Sigmoid colon (tissue), 7 donors: ENCODE measurements at regions of chr19 and their contacts with region 1.

Region 1: DNA sequence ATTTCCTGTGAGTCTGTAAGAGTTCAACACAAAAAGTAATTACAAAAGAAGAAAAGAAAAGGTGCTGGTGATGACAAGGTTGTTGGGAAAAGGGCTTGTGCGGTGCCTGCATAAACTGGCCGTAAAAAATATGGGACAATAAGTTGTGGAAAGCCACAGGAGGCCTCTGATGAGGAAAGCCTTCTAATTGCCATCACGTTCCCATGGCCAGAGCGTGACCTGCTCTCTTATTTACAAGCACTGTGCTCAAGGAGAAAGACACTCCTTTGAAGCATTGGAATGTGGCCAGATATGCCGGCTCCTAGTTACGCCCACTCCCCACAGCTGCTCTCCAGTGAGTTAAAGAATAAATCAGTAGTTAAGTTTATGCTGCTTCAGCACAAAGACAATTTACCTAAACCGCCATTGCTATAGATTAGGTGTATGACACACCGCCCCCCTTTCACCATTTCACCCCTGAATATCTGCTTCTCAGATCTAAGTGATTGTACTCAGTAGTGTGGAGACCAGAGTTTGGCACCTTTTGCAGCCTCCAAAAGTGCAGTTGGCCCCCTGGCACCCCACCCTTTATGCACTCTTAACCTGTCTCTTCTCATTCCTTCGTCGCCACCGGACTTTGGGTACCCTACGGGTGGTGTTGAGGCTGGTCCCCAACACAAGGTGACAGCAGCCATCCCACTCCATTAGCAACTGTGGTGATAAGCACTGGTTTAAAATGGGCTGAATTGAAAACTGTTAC is 8.1 kb upstream of the PGLYRP1 start:
- DNase-seq: no peak
- H3K4me3 ChIP-seq: no peak overlapping the region
- H3K27ac ChIP-seq: no peak overlapping the region
- H3K4me1 ChIP-seq: peaks cover 0 to 4% (median 0%) of the 10 kb centered on the region in 4 donors
- H3K27me3 ChIP-seq: peaks cover 0 to 37% (median 4%) of the 10 kb centered on the region in 3 donors
- CTCF ChIP-seq: no peak
- EP300 ChIP-seq: no peak
- POLR2A ChIP-seq: no peak

Region 2: DNA sequence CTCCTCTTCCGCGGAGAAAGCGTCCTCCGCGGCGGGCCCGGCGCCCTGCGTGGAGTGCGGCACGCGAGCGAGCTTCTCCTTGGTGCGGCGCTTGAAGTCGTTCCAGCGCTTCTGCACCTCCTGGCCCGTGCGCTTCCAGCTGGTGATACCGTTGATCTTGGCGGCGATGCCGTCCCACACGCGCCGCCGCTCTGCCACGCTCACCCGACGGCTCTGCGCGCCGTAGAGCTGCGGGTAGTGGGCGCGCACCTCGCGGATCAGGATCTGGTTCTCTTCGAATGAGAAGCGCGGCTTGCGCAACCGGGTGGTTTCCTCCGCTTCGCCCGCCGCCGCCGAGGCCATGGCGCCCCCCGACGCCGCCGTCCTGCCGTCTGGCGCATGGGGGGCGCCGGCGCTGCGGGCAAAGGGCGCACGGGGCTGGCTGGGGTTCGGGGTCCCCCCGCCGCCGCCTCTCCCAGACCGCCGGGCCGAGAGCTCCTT is 129.5 kb before region 1 on chr19:
- intact Hi-C with region 1: no loop called
- DNase-seq: peak; percentile 82
- H3K4me3 ChIP-seq: peak overlapping the region; percentile 71 to 80 (median 74)
- H3K27ac ChIP-seq: peak overlapping the region; percentile 83 to 89 (median 84)
- H3K4me1 ChIP-seq: peaks cover 0 to 26% (median 21%) of the 10 kb centered on the region in 4 donors
- H3K27me3 ChIP-seq: no peaks in the 10 kb centered on the region
- CTCF ChIP-seq: no peak
- EP300 ChIP-seq: no peak
- POLR2A ChIP-seq: no peak

Region 3: DNA sequence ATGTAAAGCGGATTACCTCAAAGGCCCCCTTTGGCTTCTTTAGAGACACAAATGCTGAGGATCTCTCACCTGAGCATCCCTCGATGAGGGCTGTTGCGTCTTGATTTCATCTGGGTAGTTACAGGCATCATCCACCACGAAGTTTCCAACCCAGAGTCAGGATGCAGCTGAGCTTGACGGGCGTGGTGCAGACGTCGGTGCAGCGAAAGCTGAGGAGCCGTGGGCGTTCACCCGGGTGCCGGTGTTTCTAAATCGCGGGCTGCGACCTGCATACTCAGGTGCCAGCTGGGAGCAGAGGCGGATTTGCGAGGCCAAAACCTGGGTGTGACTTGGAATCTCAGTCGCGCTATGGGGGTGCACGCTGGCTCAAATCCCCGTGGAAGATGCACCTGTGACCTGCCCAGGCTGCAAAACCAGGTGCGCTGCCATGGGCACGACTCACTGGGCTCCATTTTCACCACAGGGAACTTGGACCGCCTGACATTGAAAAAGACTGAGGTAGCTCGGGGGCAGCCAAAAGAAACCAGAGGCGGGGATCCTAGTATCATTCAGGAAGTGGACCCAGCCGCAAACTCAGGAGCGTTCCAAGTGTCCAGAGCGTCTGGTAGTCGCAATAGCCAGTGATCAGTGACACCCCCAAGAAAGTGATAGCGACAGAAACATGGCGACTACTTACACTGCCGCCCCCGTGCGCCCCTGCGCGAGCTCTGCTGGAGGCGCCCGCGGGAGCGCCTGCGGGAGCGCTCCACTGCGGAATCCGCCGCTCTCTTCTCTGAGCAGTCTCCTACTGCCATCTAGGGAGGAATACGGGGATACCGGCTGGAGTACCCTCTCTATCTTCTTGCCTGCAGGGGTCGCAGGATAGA is 46.2 kb after region 1 on chr19:
- intact Hi-C with region 1: loop called (anchors 2 kb)
- DNase-seq: peak; percentile 73
- H3K4me3 ChIP-seq: peak overlapping the region; percentile 4 to 36 (median 22)
- H3K27ac ChIP-seq: no peak overlapping the region
- H3K4me1 ChIP-seq: peaks cover 0 to 19% (median 11%) of the 10 kb centered on the region in 4 donors
- H3K27me3 ChIP-seq: peaks cover 16 to 45% (median 43%) of the 10 kb centered on the region in 3 donors
- CTCF ChIP-seq: peak in 3 of 4 experiments; percentile 42 to 55 (median 48)
- EP300 ChIP-seq: no peak
- POLR2A ChIP-seq: no peak

Region 4: DNA sequence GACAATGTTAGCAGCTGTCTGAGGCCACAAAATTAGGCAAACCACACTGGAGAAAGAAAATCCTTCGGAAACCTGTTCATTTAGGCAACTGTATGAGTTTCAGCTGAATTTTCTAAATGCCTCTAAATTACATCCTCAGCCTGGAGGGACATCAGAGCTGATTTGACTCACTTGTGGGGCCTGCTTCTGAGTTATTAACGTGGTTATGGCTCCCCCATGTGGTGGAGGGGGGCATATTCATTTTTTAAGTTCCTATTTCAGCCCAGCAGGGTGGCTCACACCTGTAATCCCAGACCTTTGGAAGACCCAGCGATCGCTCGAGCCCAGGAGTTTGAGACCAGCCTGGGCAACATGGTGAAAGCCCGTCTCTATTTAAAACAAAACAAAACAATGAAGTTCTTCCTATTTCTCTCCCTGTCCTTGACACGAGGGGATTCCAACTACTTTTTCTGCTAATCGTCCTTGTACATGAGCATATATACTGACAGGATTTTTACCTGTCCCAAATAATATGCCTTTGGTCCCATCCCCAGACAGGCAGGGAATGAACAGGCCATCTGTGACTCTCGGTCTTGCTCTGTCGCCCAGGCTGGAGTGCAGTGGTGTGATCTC is 234.3 kb after region 1 on chr19:
- intact Hi-C with region 1: loop called (anchors 2 kb)
- DNase-seq: peak; percentile 76
- H3K4me3 ChIP-seq: no peak overlapping the region
- H3K27ac ChIP-seq: no peak overlapping the region
- H3K4me1 ChIP-seq: no peaks in the 10 kb centered on the region
- H3K27me3 ChIP-seq: peaks cover 0 to 13% (median 0%) of the 10 kb centered on the region in 3 donors
- CTCF ChIP-seq: peak; percentile 77 to 94 (median 82)
- EP300 ChIP-seq: no peak
- POLR2A ChIP-seq: no peak